RWPE1 (cell line): ENCODE measurements at regions of chr19 and their contacts with region 1.

Region 1: GRCh38 chr19:17859533-17860330 is at the start of gene RPL18A:
- DNase-seq: peak; percentile 97
- H3K27ac ChIP-seq: peak within 1 kb of the TSS; percentile 77
- CTCF ChIP-seq: peak; percentile 98

Region 2: DNA sequence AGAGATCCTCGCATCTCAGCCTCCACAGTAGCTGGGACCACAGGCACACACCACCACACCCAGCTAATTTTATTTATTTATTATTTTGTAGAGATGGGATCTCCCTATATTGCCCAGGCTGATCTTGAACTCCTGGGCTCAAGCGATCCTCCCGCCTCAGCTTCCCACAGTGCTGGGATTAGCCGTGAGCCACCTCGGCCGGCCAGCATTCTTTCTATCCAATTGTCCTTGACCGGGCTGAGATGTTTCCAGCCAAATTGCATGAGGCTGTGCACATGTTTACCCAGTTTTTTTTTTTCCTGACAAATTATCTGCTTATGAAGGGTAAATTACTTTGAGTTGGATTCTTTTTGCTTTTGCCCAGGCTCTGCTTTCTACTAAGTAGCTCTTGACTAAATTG is 199.7 kb before region 1 on chr19:
- CTCF ChIA-PET with region 1: no interaction called
- POLR2A ChIA-PET with region 1: interaction called, 13 read pairs
- DNase-seq: no peak
- H3K27ac ChIP-seq: no peak overlapping the region
- CTCF ChIP-seq: no peak

Region 3: GRCh38 chr19:17739121-17739875 is 120.4 kb before region 1 on chr19:
- CTCF ChIA-PET with region 1: no interaction called
- POLR2A ChIA-PET with region 1: no interaction called
- DNase-seq: no peak
- H3K27ac ChIP-seq: peak overlapping the region; percentile 35
- CTCF ChIP-seq: no peak

Region 4: GRCh38 chr19:17871878-17872250 is 12.1 kb after region 1 on chr19 and contains the start of gene SLC5A5:
- CTCF ChIA-PET with region 1: interaction called, 17 read pairs
- POLR2A ChIA-PET with region 1: interaction called, 3 read pairs
- DNase-seq: no peak
- H3K27ac ChIP-seq: no peak within 1 kb of the TSS
- CTCF ChIP-seq: no peak

Region 5: DNA sequence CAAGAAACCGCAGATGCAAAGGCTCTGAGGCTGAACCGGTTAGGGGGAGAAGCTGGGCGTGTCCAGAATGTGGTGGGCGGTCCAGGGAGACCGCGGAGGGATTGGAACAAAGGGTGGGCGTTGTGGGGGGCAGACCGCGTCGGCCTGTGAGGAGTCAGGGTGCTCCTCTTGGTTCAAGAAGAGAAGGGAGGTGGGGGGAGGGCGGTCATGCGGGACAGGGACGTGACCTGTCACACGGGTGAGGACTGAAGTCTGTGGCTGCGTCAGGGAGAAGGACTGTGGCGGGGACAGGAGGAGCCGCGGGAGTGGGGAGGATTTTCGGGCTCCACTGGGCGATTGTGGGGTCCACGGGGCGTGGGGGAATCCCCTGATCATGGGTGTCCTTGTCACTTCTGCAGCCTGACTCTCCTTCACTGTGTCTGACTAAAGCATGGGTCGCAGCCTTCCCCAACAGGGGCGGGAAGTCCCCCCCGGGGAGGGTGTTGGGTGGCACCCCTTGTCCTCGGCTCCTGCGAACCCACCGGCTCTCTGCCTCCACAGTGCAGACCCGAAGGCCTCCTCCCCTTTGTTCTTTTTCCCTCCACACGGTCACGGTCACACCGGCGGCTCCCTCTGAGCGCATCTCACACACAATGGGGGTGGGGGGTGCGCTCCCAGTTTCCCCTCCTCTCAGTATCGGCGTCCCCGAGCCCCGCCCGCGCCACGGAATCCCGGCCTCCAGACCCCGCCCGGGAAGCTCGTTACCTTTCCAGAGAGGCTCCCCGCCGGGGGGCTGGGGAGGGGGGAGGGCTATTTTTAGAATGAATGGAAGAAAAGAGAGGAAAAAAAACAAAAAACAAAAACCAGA is 90.8 kb after region 1 on chr19:
- CTCF ChIA-PET with region 1: no interaction called
- POLR2A ChIA-PET with region 1: no interaction called
- DNase-seq: no peak
- H3K27ac ChIP-seq: no peak overlapping the region
- CTCF ChIP-seq: no peak